ENCODE measurements at regions of chr17 and their contacts with region 1.

Region 1: GRCh38 chr17:72618001-72618509 is 474.4 kb downstream of the SLC39A11 start:
- DNase-seq: peak; percentile 47 to 63 (median 55)
- ATAC-seq: peak; percentile 67
- H3K4me3 ChIP-seq: no peak overlapping the region
- H3K27ac ChIP-seq: peak overlapping the region; percentile 17 to 80 (median 67)
- H3K4me1 ChIP-seq: peaks cover 47% of the 10 kb centered on the region
- H3K27me3 ChIP-seq: no peaks in the 10 kb centered on the region
- CTCF ChIP-seq: no peak
- POLR2A ChIP-seq: peak in 2 of 3 donors; percentile 53 to 55

Region 2: GRCh38 chr17:72677714-72678390 is 59.8 kb after region 1 on chr17:
- intact Hi-C with region 1: loop called (anchors 10 kb)
- DNase-seq: no peak
- ATAC-seq: no peak
- H3K4me3 ChIP-seq: no peak overlapping the region
- H3K27ac ChIP-seq: no peak overlapping the region
- H3K4me1 ChIP-seq: no peaks in the 10 kb centered on the region
- H3K27me3 ChIP-seq: no peaks in the 10 kb centered on the region
- CTCF ChIP-seq: no peak
- POLR2A ChIP-seq: no peak

Measured in body of pancreas (tissue), 4 donors.